ENCODE measurements at regions of chr20 and their contacts with region 1.

Region 1: DNA sequence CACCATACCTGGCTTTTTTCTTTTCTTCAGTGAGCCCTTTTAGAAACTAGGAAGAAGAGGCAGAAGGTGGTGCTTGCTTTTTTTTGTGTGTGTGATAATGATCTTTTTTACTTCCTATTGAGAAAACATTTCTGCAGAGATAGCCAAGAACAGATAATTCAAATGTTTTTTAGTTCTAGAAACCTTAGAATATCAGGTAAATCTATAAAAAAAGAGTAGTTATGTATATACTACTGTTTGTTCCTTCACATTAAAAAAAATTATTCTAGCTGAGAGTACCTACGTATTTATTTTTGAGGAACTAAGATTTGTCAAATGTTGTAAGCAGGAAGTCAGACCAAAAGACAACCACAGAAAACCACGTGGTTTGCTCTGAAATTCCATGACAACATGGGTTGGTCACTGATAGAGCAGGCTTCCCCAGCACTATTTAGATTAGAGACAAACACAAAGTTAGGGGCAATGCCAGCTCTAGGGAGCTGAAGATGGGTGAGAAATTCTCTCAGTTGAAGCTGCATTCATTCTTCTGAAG is 12.8 kb downstream of the STK4 start:
- DNase-seq: no peak
- ATAC-seq: peak; percentile 71
- H3K4me3 Mint-ChIP-seq: peak overlapping the region; percentile 73
- H3K27ac Mint-ChIP-seq: peak overlapping the region; percentile 94
- H3K4me1 Mint-ChIP-seq: peaks cover 54% of the 10 kb centered on the region
- H3K27me3 Mint-ChIP-seq: no peaks in the 10 kb centered on the region

Region 2: DNA sequence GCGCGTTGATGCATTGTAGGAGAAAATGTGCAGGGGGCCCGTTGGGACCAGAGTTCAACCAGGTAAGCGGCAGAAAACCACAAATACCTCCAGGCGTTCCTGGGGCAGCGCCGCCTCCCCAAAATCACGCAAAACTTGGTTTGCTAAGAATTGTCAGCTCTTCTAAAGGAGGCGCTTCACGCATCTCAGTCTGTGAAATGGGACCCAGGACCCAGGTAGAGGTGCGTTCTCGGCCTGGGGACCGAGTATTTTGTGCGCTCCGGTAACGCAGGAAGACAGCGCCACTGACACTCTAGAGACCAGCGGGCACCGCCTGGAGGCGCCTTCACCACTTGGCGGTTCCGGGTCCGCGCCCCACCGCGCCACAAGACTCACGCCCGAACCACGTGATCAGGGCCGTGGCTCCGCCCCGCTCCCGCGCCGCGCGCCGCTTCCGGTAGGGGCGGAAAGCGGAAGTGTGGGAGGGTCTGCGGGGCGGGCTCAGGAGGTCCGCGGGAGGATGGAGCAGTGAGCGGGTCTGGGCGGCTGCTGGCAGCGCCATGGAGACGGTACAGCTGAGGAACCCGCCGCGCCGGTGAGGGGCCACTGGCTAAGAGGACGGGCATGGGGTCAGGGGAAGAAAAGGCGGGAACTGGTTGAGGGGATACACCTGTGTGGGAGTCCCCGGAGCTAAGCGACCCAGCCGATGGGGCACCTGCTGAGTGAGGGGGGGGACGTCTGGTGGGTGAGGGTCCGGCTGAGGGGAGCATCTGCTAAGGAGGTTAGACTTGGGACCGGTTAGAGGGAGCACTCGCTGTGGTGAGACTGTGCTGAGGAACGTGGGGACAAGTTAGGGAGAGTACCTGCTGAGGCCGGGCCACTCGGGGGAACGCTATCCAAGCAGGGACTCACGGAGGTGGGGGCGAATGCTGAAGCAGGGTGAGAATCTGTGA is 12.9 kb before region 1 on chr20 and contains the start of gene STK4:
- POLR2A ChIA-PET with region 1: interaction called, 72 read pairs
- DNase-seq: peak; percentile 98
- ATAC-seq: peak; percentile 79
- H3K4me3 Mint-ChIP-seq: peak within 1 kb of the TSS; percentile 97
- H3K27ac Mint-ChIP-seq: peak within 1 kb of the TSS; percentile 95
- H3K4me1 Mint-ChIP-seq: peaks cover 53% of the 10 kb centered on the region
- H3K27me3 Mint-ChIP-seq: no peaks in the 10 kb centered on the region
- total RNA-seq, gene STK4: 205 to 229 TPM

Region 3: GRCh38 chr20:44990425-44990824 is 11.3 kb after region 1 on chr20:
- POLR2A ChIA-PET with region 1: interaction called, 13 read pairs
- DNase-seq: no peak
- ATAC-seq: peak; percentile 67
- H3K4me3 Mint-ChIP-seq: peak overlapping the region; percentile 77
- H3K27ac Mint-ChIP-seq: peak overlapping the region; percentile 87
- H3K4me1 Mint-ChIP-seq: peaks cover 54% of the 10 kb centered on the region
- H3K27me3 Mint-ChIP-seq: no peaks in the 10 kb centered on the region

Region 4: DNA sequence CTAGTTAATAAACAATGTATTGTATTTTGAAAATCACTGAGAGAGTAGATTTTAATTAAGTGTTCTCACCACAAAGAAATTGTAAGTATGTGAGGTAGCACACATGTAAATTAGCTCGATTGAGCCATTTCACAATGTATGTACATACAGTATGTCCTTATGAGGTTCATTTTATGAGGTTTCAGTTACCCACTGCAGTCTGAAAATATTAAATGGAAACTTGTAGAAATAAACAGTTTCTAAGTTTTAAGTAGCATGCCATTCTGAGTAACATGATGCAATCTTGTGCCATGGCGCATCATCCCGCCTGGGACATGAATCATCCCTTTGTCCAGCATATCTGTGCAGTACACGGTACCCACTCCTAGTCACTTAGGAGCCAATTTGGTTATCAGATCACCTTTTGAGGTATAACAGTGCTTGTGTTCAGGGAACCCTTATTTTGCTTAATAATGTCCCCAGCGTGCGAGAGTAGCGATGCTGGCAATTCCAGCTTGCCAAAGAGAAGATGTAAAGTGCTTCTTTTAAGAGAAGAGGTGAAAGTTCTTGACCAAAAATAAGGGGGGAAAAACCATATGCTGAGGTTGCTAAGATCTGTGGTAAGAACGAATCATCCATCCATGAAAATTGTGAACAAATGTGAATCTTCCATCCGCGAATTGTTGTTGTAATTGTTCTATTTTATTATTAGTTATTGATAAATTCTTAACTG is 57.0 kb after region 1 on chr20:
- POLR2A ChIA-PET with region 1: no interaction called
- DNase-seq: no peak
- ATAC-seq: no peak
- H3K4me3 Mint-ChIP-seq: no peak overlapping the region
- H3K27ac Mint-ChIP-seq: no peak overlapping the region
- H3K4me1 Mint-ChIP-seq: peaks cover 41% of the 10 kb centered on the region
- H3K27me3 Mint-ChIP-seq: no peaks in the 10 kb centered on the region